Tibial artery (tissue), 4 donors: ENCODE measurements at regions of chr21 and their contacts with region 1.

Region 1: GRCh38 chr21:42337830-42338728 is 12.7 kb downstream of the TFF2 start:
- DNase-seq: peak in 1 of 2 donors; percentile 58
- H3K4me3 ChIP-seq: no peak overlapping the region
- H3K27ac ChIP-seq: no peak overlapping the region
- H3K4me1 ChIP-seq: peaks cover 0 to 8% (median 0%) of the 10 kb centered on the region in 4 donors
- H3K27me3 ChIP-seq: peaks cover 0 to 33% of the 10 kb centered on the region in 2 donors
- CTCF ChIP-seq: peak; percentile 18 to 21

Region 2: GRCh38 chr21:42125571-42126544 is 212.2 kb before region 1 on chr21:
- intact Hi-C with region 1: no loop called
- DNase-seq: no peak
- H3K4me3 ChIP-seq: no peak overlapping the region
- H3K27ac ChIP-seq: no peak overlapping the region
- H3K4me1 ChIP-seq: peaks cover 0 to under 1% (median 0%) of the 10 kb centered on the region in 4 donors
- H3K27me3 ChIP-seq: peaks cover 0 to 76% of the 10 kb centered on the region in 2 donors
- CTCF ChIP-seq: no peak

Region 3: GRCh38 chr21:43001295-43001694 is 663.2 kb after region 1 on chr21:
- intact Hi-C with region 1: loop called (anchors 5 kb)
- DNase-seq: peak in 1 of 2 donors; percentile 77
- H3K4me3 ChIP-seq: no peak overlapping the region
- H3K27ac ChIP-seq: peak overlapping the region; percentile 58 to 64
- H3K4me1 ChIP-seq: peaks cover 0 to 27% (median 16%) of the 10 kb centered on the region in 4 donors
- H3K27me3 ChIP-seq: no peaks in the 10 kb centered on the region
- CTCF ChIP-seq: no peak